MCF 10A (cell line): ENCODE measurements at regions of chrX and their contacts with region 1.

Region 1: DNA sequence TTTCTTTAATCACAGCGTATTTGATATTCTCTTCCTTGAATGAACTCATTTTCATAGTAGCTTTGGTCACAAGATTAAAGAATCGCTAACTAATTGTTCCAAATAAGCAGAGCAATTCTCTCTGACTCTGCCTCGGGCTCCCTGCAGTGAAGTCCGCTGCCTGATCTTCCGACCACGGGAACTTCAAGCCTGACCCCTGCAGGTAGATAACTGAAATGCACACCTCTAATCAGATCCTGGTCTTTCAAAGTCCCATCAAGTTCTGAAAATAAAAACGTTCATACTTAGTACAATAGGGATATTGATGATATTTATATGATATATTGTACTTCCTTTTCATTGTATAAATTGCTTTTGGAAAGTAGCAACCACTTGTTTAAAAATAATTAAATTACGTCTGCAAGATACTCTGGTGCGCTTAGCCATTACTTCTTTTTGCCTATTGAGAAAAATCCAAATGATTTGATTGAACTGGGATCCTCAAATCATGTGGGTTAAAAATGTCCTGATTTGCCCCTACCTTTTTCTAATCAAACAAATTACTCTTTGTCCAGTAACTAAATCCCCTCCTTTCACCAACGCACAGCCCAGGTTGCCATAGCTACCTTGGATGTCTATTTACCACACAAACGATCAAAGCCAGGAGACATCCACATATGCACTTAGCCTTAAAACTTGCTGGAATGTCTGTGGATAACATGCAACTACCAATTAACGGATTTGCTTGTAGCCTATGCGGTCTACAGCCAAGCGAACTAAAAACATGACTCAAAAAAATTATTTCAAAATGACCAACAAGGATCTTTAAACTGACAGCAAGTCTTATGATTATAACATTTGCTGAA is 4.2 kb downstream of the MID1 start:
- DNase-seq: peak; percentile 71
- H3K4me3 Mint-ChIP-seq: peak overlapping the region; percentile 35
- H3K27ac Mint-ChIP-seq: no peak overlapping the region
- H3K4me1 Mint-ChIP-seq: peaks cover 48% of the 10 kb centered on the region
- H3K27me3 Mint-ChIP-seq: no peaks in the 10 kb centered on the region
- CTCF ChIP-seq: peak; percentile 60

Region 2: DNA sequence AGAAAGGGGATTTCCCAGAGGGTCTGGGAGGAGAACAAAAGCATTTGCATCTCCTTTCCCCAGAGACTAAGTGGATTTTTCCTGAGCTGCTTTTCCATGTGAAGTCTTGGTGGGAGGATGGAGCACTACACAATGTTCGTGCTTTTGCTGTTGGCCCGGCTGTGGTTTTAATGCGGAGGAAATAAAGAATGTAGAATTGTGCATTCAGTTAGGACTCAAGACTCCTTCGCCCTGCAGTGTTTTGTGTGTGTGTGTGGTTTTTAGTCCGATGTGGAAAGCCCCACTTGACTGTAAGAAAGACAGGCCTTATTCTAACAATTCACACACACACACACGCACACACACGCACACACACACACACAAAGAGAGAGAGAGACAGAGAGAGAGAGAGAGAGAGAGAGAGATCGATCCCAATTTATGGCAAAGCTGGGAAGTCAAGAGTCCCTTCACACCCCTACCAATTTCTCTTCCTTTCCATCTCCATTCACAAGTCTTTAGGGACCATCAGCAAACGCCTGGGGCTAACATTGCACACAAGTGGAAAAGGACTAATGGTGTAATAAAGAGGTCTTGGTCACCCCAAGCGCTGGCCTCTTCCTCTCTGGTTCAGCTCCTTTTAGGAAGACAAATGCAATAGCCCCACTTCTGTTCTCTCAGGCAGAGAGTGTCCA is 604.8 kb before region 1 on chrX:
- CTCF ChIA-PET with region 1: no interaction called
- POLR2A ChIA-PET with region 1: no interaction called
- intact Hi-C with region 1: no loop called
- DNase-seq: no peak
- H3K4me3 Mint-ChIP-seq: no peak overlapping the region
- H3K27ac Mint-ChIP-seq: peak overlapping the region; percentile 2
- H3K4me1 Mint-ChIP-seq: peaks cover 25% of the 10 kb centered on the region
- H3K27me3 Mint-ChIP-seq: no peaks in the 10 kb centered on the region
- CTCF ChIP-seq: no peak

Region 3: GRCh38 chrX:10254741-10255140 is 361.4 kb before region 1 on chrX:
- CTCF ChIA-PET with region 1: interaction called, 5 read pairs
- POLR2A ChIA-PET with region 1: no interaction called
- intact Hi-C with region 1: loop called (anchors 1 kb)
- DNase-seq: peak; percentile 26
- H3K4me3 Mint-ChIP-seq: no peak overlapping the region
- H3K27ac Mint-ChIP-seq: no peak overlapping the region
- H3K4me1 Mint-ChIP-seq: no peaks in the 10 kb centered on the region
- H3K27me3 Mint-ChIP-seq: no peaks in the 10 kb centered on the region
- CTCF ChIP-seq: peak; percentile 35

Region 4: DNA sequence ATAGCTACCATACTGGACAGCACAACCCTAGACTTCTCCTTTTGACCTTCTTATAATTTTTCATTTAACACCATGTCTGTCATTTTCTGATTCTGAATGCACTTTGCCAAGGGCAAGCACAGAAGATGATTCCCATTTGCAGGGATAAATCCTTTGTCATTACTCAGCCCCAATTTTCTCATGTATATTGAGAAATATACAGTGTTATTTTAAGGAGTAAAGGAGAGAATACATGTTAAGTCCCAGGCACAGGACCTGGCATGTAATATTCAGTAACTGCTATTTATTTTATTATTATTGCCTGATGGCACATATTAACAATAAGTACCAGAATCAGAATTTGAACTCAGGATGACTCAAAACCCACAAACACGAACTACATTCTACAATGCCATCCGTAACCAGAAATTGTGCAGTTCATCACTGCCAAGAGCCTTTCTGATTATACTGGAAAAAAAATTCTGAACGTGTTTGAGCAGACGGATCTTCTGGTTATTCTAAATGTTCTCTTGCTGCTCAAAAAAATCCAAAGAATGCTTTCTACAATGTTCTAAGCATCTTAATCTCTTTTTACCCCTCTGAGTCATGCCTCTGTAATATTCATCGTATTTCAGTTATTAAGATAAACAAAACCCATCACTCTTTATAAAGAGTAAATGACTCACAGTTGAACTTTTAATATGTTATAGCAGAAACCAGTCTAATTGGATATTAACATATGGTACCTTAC is 165.8 kb before region 1 on chrX:
- CTCF ChIA-PET with region 1: no interaction called
- POLR2A ChIA-PET with region 1: no interaction called
- intact Hi-C with region 1: loop called (anchors 10 kb)
- DNase-seq: peak; percentile 28
- H3K4me3 Mint-ChIP-seq: no peak overlapping the region
- H3K27ac Mint-ChIP-seq: peak overlapping the region; percentile 31
- H3K4me1 Mint-ChIP-seq: peaks cover 26% of the 10 kb centered on the region
- H3K27me3 Mint-ChIP-seq: no peaks in the 10 kb centered on the region
- CTCF ChIP-seq: no peak

Region 5: GRCh38 chrX:10597871-10598270 is 18.3 kb before region 1 on chrX:
- CTCF ChIA-PET with region 1: interaction called, 42 read pairs
- POLR2A ChIA-PET with region 1: interaction called, 8 read pairs
- intact Hi-C with region 1: no loop called
- DNase-seq: peak; percentile 61
- H3K4me3 Mint-ChIP-seq: no peak overlapping the region
- H3K27ac Mint-ChIP-seq: no peak overlapping the region
- H3K4me1 Mint-ChIP-seq: no peaks in the 10 kb centered on the region
- H3K27me3 Mint-ChIP-seq: no peaks in the 10 kb centered on the region
- CTCF ChIP-seq: peak; percentile 71

Region 6: GRCh38 chrX:10636337-10636736 is 20.2 kb after region 1 on chrX:
- CTCF ChIA-PET with region 1: interaction called, 37 read pairs
- POLR2A ChIA-PET with region 1: interaction called, 70 read pairs
- intact Hi-C with region 1: loop called (anchors 1 kb)
- DNase-seq: peak; percentile 72
- H3K4me3 Mint-ChIP-seq: peak overlapping the region; percentile 52
- H3K27ac Mint-ChIP-seq: no peak overlapping the region
- H3K4me1 Mint-ChIP-seq: peaks cover 33% of the 10 kb centered on the region
- H3K27me3 Mint-ChIP-seq: peaks cover 20% of the 10 kb centered on the region
- CTCF ChIP-seq: peak; percentile 79

Region 7: DNA sequence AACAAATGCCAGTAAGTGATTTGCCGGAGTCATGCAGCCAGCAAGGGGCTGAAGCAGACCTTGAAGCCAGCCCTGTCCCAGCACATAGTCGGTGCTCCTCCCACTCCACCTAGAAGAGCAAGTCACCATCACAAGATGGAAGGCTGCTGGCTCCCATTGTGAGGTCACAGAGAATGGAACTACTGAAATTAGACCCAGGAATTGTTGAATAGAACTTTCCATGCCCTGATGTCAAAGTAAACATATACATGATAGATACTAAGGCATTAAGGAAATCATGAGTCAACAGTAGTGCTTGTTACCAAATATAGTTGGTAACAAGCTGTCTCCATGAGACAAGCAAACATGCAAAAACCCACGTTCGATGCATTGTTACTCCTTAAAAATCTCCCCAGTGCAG is 181.3 kb after region 1 on chrX:
- CTCF ChIA-PET with region 1: no interaction called
- POLR2A ChIA-PET with region 1: no interaction called
- intact Hi-C with region 1: no loop called
- DNase-seq: no peak
- H3K4me3 Mint-ChIP-seq: no peak overlapping the region
- H3K27ac Mint-ChIP-seq: no peak overlapping the region
- H3K4me1 Mint-ChIP-seq: no peaks in the 10 kb centered on the region
- H3K27me3 Mint-ChIP-seq: peaks cover 16% of the 10 kb centered on the region
- CTCF ChIP-seq: no peak